Endothelial cell of umbilical vein (primary cell): ENCODE measurements at regions of chr14 and their contacts with region 1.

Region 1: DNA sequence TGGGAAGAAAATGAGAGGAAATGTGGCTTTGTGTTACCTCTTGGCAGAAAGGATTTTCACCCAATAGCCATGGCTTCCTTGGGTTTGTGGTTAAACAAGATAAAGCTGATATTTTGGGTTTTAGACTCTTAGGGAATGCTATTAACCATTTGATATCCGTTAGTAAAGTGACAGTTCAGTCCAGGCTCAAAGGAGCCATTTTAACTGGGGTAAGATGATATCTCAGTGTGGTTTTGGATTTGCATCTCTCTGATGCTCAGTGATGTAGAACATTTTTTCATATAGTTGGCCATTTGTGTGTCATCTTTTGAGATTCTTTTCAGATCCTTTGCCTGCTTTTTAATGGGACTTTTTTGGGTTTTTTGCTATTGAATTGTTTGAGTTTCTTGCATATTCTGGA is 30.1 kb downstream of the IFT43 start:
- DNase-seq: no peak
- H3K4me3 ChIP-seq: no peak overlapping the region
- H3K27ac ChIP-seq: no peak overlapping the region
- H3K4me1 ChIP-seq: no peaks in the 10 kb centered on the region
- H3K27me3 ChIP-seq: no peaks in the 10 kb centered on the region
- CTCF ChIP-seq: no peak
- POLR2A ChIP-seq: no peak

Region 2: GRCh38 chr14:75589931-75590330 is 425.7 kb before region 1 on chr14:
- CTCF ChIA-PET with region 1: no interaction called
- POLR2A ChIA-PET with region 1: no interaction called
- dilution Hi-C with region 1: no loop called
- intact Hi-C with region 1: no loop called
- DNase-seq: no peak
- H3K4me3 ChIP-seq: no peak overlapping the region
- H3K27ac ChIP-seq: no peak overlapping the region
- H3K4me1 ChIP-seq: no peaks in the 10 kb centered on the region
- H3K27me3 ChIP-seq: peaks cover 6 to 12% of the 10 kb centered on the region in 2 experiments
- CTCF ChIP-seq: no peak
- POLR2A ChIP-seq: no peak

Region 3: GRCh38 chr14:76040704-76041103 is 25.0 kb after region 1 on chr14:
- CTCF ChIA-PET with region 1: no interaction called
- POLR2A ChIA-PET with region 1: no interaction called
- dilution Hi-C with region 1: no loop called
- intact Hi-C with region 1: loop called (anchors 1 kb)
- DNase-seq: no peak
- H3K4me3 ChIP-seq: no peak overlapping the region
- H3K27ac ChIP-seq: no peak overlapping the region
- H3K4me1 ChIP-seq: no peaks in the 10 kb centered on the region
- H3K27me3 ChIP-seq: no peaks in the 10 kb centered on the region
- CTCF ChIP-seq: no peak
- POLR2A ChIP-seq: no peak